Aorta (tissue), 5 donors: ENCODE measurements at regions of chr4 and their contacts with region 1.

Region 1: DNA sequence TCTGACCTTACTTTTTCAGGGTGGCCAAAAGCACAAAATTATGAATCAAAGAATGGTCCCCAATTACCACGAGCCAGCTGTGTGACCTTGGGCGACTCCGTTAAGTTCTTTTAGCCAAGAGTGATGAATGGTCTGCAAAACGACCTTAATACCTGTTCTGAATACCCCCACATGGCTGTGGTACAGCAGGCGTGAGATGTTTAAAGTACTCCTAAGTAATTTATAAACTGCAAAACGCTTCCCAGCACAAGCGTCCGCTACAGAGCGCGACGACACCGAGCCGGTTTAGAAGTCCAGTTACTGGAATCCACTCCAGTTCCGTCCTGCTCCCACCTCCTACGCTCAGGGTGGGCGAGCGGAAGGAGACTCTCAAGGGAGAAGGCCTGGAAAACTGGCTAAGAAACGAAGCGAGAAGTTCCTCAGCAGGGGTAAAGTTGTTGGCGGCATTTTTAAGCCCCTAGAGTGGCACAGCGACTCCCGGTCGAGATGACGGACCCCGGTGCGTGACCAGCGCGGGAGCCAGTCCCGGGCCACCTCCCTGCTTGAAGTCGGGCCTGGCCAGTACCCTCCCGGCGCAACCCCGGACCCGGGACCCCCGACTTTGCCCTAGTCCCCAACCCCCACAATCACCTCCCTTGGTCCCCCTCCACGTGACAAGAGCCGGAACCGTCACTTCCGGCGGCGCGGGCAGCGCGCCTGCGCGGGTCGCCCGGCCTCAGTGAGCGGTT is 683 bp upstream of the BMP2K start:
- DNase-seq: peak; percentile 92 to 95
- ATAC-seq: peak; percentile 95
- H3K4me3 ChIP-seq: peak overlapping the region; percentile 95 to 97
- H3K27ac ChIP-seq: peak overlapping the region; percentile 77 to 98
- H3K4me1 ChIP-seq: peaks cover 0 to 2% of the 10 kb centered on the region in 2 donors
- H3K27me3 ChIP-seq: no peaks in the 10 kb centered on the region

Region 2: DNA sequence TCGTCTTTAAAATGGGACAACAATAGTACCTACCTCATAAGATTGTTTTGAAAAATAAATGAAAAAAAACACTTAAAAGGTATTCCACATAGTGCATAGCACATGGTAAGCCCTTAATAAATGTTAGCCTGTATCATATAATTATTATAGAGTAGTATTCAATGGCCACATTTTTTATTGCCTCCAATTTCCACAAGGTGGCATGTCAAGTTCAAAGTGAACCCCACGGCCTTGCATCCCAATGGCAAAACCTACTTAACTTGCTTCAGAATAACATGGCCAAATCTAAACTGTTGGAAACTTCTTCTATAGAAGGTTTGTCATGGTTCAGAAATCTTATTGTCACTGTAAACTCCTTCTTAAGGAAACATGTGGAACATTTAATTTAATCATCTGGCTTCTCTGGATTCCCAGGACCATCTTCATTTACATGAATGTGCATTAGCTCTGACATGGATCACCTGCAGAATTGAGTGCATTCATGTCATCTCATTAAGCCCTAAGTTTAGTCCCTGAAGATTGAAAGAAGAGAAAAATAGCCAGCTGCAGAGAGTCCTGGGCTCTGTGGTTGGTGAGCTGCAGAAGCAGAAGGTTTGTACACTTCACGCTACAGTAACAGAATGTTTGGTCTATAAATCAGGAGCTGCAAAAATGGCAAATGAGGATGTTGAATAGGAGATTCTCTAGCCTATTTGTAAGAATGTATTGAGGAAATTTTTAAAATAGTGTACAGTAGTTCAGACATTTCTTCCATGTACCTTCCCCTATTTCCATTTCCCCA is 162.9 kb before region 1 on chr4:
- intact Hi-C with region 1: loop called in 1 of 2 experiments (anchors 10 kb)
- DNase-seq: no peak
- ATAC-seq: peak; percentile 79
- H3K4me3 ChIP-seq: no peak overlapping the region
- H3K27ac ChIP-seq: no peak overlapping the region
- H3K4me1 ChIP-seq: no peaks in the 10 kb centered on the region
- H3K27me3 ChIP-seq: no peaks in the 10 kb centered on the region

Region 3: GRCh38 chr4:78644744-78645330 is 130.6 kb before region 1 on chr4:
- intact Hi-C with region 1: loop called (anchors 5 kb)
- DNase-seq: peak in 1 of 2 donors; percentile 77
- ATAC-seq: peak; percentile 91
- H3K4me3 ChIP-seq: no peak overlapping the region
- H3K27ac ChIP-seq: no peak overlapping the region
- H3K4me1 ChIP-seq: peaks cover 0 to 1% of the 10 kb centered on the region in 2 donors
- H3K27me3 ChIP-seq: no peaks in the 10 kb centered on the region

Region 4: GRCh38 chr4:78885598-78885997 is 110.1 kb after region 1 on chr4:
- intact Hi-C with region 1: no loop called
- DNase-seq: no peak
- ATAC-seq: no peak
- H3K4me3 ChIP-seq: no peak overlapping the region
- H3K27ac ChIP-seq: no peak overlapping the region
- H3K4me1 ChIP-seq: no peaks in the 10 kb centered on the region
- H3K27me3 ChIP-seq: no peaks in the 10 kb centered on the region